Tibial artery (tissue), 4 donors: ENCODE measurements at regions of chr12 and their contacts with region 1.

Region 1: GRCh38 chr12:42332301-42333285 is 6.6 kb downstream of the PPHLN1 start:
- DNase-seq: no peak
- H3K4me3 ChIP-seq: no peak overlapping the region
- H3K27ac ChIP-seq: no peak overlapping the region
- H3K4me1 ChIP-seq: peaks cover 0 to 15% (median 7%) of the 10 kb centered on the region in 4 donors
- H3K27me3 ChIP-seq: no peaks in the 10 kb centered on the region
- CTCF ChIP-seq: peak; percentile 53 to 66

Region 2: GRCh38 chr12:42129595-42130204 is 202.9 kb before region 1 on chr12:
- intact Hi-C with region 1: loop called (anchors 5 kb)
- DNase-seq: no peak
- H3K4me3 ChIP-seq: no peak overlapping the region
- H3K27ac ChIP-seq: no peak overlapping the region
- H3K4me1 ChIP-seq: peaks cover 0 to 20% (median 10%) of the 10 kb centered on the region in 4 donors
- H3K27me3 ChIP-seq: no peaks in the 10 kb centered on the region
- CTCF ChIP-seq: peak; percentile 81 to 83

Region 3: GRCh38 chr12:42238240-42239140 is 94.1 kb before region 1 on chr12 and contains the start of gene YAF2:
- intact Hi-C with region 1: no loop called
- DNase-seq: peak; percentile 90 to 93
- H3K4me3 ChIP-seq: peak within 1 kb of the TSS; percentile 92 to 94
- H3K27ac ChIP-seq: peak within 1 kb of the TSS; percentile 90 to 94
- H3K4me1 ChIP-seq: peaks cover 0 to 35% (median 15%) of the 10 kb centered on the region in 4 donors
- H3K27me3 ChIP-seq: no peaks in the 10 kb centered on the region
- CTCF ChIP-seq: no peak